ENCODE measurements at regions of chr16 and their contacts with region 1.

Region 1: GRCh38 chr16:84952335-84953189 is 58.8 kb downstream of the ZDHHC7 start:
- DNase-seq: peak in 1 of 2 donors; percentile 78
- ATAC-seq: peak; percentile 94
- H3K4me3 ChIP-seq: no peak overlapping the region
- H3K27ac ChIP-seq: no peak overlapping the region
- H3K4me1 ChIP-seq: no peaks in the 10 kb centered on the region
- H3K27me3 ChIP-seq: no peaks in the 10 kb centered on the region

Region 2: DNA sequence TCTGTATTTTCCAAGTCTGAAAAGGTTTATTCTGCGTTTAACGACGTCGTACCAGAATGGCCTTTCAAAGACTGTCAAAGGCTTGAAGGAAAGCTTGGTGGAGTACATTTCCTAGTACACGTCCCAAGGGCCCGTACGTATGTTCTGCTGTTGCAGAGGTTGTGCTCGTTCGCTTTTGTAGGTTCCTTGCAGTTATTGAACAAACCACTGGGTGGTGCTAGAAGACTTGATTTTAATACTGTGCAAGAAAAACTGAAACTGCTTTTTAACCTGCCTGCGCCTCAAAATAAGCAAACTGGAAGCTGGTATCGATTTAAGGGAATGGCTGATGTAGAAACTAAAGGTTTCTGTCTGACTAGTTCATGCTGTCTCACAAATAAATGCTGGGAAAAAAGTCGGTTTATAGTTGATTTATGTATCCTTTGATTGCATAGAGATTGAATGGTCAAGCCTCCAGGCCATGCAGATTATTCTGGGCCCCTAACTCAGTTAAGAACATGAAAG is 198.2 kb before region 1 on chr16:
- intact Hi-C with region 1: loop called (anchors 1 to 2 kb)
- DNase-seq: no peak
- ATAC-seq: peak; percentile 89
- H3K4me3 ChIP-seq: no peak overlapping the region
- H3K27ac ChIP-seq: no peak overlapping the region
- H3K4me1 ChIP-seq: no peaks in the 10 kb centered on the region
- H3K27me3 ChIP-seq: no peaks in the 10 kb centered on the region

Region 3: GRCh38 chr16:84881702-84882521 is 70.7 kb before region 1 on chr16:
- intact Hi-C with region 1: no loop called
- DNase-seq: no peak
- ATAC-seq: no peak
- H3K4me3 ChIP-seq: no peak overlapping the region
- H3K27ac ChIP-seq: no peak overlapping the region
- H3K4me1 ChIP-seq: no peaks in the 10 kb centered on the region
- H3K27me3 ChIP-seq: no peaks in the 10 kb centered on the region

Region 4: GRCh38 chr16:84925092-84925772 is 27.3 kb before region 1 on chr16:
- intact Hi-C with region 1: loop called (anchors 2 kb)
- DNase-seq: peak; percentile 75 to 91
- ATAC-seq: no peak
- H3K4me3 ChIP-seq: no peak overlapping the region
- H3K27ac ChIP-seq: no peak overlapping the region
- H3K4me1 ChIP-seq: no peaks in the 10 kb centered on the region
- H3K27me3 ChIP-seq: no peaks in the 10 kb centered on the region